ENCODE measurements at regions of chr2 and their contacts with region 1.

Region 1: GRCh38 chr2:157182834-157183396 is 74.6 kb upstream of the GALNT5 start:
- DNase-seq: peak; percentile 88
- H3K4me3 ChIP-seq: peak overlapping the region; percentile 10
- H3K27ac ChIP-seq: peak overlapping the region; percentile 84
- H3K4me1 ChIP-seq: peaks cover 29% of the 10 kb centered on the region
- H3K27me3 ChIP-seq: no peaks in the 10 kb centered on the region
- CTCF ChIP-seq: no peak

Region 2: DNA sequence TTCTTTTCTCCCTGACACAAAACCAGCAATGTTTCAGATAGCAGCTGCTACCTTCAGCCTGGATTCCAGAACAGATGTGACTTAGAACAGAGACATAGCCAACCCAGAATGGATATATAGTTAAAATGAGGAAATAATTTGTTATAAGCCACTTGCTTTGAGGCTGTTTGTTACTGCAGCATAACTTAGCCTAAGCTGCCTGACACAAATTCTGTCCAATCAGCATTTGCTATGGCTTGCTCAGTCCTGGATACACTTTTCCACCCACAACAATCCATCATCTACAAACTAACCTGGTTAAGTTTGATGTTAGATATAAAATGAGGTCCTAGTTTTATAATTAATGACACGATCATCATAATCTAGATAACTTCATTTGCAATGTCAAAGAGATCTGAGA is 1330.8 kb before region 1 on chr2:
- CTCF ChIA-PET with region 1: interaction called, 10 read pairs
- POLR2A ChIA-PET with region 1: no interaction called
- intact Hi-C with region 1: no loop called
- DNase-seq: no peak
- H3K4me3 ChIP-seq: no peak overlapping the region
- H3K27ac ChIP-seq: no peak overlapping the region
- H3K4me1 ChIP-seq: no peaks in the 10 kb centered on the region
- H3K27me3 ChIP-seq: no peaks in the 10 kb centered on the region
- CTCF ChIP-seq: no peak

Region 3: GRCh38 chr2:156892467-156893281 is 290.2 kb before region 1 on chr2:
- CTCF ChIA-PET with region 1: interaction called, 10 read pairs
- POLR2A ChIA-PET with region 1: no interaction called
- intact Hi-C with region 1: no loop called
- DNase-seq: peak; percentile 61
- H3K4me3 ChIP-seq: peak overlapping the region; percentile 26
- H3K27ac ChIP-seq: no peak overlapping the region
- H3K4me1 ChIP-seq: no peaks in the 10 kb centered on the region
- H3K27me3 ChIP-seq: peaks cover 14% of the 10 kb centered on the region
- CTCF ChIP-seq: peak; percentile 67

Region 4: DNA sequence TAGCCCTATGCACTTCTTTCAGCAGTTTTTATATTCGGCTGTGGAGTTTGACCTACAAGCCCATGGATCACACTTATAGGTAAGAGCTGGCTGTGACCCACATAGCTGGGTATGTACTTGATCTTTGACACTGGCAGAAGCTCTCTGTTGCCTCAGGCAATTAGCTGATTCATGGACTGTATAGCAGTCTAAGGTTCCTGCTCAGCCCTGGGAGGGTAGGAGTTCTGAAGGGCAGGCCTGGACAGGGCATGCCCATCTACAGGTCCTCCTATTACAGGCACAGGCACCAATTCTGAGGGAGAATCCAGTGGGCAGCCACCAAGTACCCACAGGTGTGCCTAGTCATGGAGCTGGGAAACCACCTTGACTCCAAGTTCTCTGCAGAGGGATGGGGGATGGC is 227.2 kb before region 1 on chr2:
- CTCF ChIA-PET with region 1: no interaction called
- POLR2A ChIA-PET with region 1: no interaction called
- intact Hi-C with region 1: no loop called
- DNase-seq: no peak
- H3K4me3 ChIP-seq: no peak overlapping the region
- H3K27ac ChIP-seq: no peak overlapping the region
- H3K4me1 ChIP-seq: no peaks in the 10 kb centered on the region
- H3K27me3 ChIP-seq: no peaks in the 10 kb centered on the region
- CTCF ChIP-seq: no peak

Region 5: GRCh38 chr2:157055660-157056199 is 127.2 kb before region 1 on chr2:
- CTCF ChIA-PET with region 1: interaction called, 3 read pairs
- POLR2A ChIA-PET with region 1: no interaction called
- intact Hi-C with region 1: loop called (anchors 5 kb)
- DNase-seq: peak; percentile 54
- H3K4me3 ChIP-seq: no peak overlapping the region
- H3K27ac ChIP-seq: no peak overlapping the region
- H3K4me1 ChIP-seq: peaks cover 5% of the 10 kb centered on the region
- H3K27me3 ChIP-seq: no peaks in the 10 kb centered on the region
- CTCF ChIP-seq: peak; percentile 67

Region 6: GRCh38 chr2:157194097-157194688 is 11.3 kb after region 1 on chr2:
- CTCF ChIA-PET with region 1: interaction called, 13 read pairs
- POLR2A ChIA-PET with region 1: no interaction called
- intact Hi-C with region 1: no loop called
- DNase-seq: peak; percentile 71
- H3K4me3 ChIP-seq: no peak overlapping the region
- H3K27ac ChIP-seq: no peak overlapping the region
- H3K4me1 ChIP-seq: no peaks in the 10 kb centered on the region
- H3K27me3 ChIP-seq: no peaks in the 10 kb centered on the region
- CTCF ChIP-seq: peak; percentile 82